ENCODE measurements at regions of chr21 and their contacts with region 1.

Region 1: GRCh38 chr21:40120940-40121575 is 253.8 kb downstream of the PCP4 start:
- DNase-seq: no peak
- ATAC-seq: peak; percentile 37 to 42
- H3K4me3 ChIP-seq: no peak overlapping the region
- H3K27ac ChIP-seq: no peak overlapping the region
- H3K4me1 ChIP-seq: no peaks in the 10 kb centered on the region
- H3K27me3 ChIP-seq: no peaks in the 10 kb centered on the region
- CTCF ChIP-seq: peak; percentile 74

Region 2: DNA sequence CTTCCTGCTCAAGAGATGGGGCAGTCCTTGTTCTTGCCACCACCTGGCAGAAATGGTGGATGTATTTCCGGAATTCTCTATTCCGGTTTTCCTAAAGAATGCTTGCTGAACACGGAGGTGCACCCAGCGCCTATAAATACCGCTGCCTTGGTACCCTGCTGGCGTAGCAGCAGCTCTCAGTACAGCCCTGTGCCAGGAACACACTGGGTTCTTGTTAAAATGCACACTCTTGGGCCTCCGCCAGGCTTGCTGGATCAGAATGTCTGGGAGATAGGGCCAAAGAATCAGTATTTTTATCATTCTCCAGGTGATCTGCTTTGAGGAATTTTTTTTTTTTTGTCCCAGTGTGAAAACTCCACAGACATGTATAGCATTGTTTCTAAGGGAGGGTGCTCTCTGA is 321.9 kb before region 1 on chr21:
- intact Hi-C with region 1: loop called (anchors 10 kb)
- DNase-seq: no peak
- ATAC-seq: no peak
- H3K4me3 ChIP-seq: no peak overlapping the region
- H3K27ac ChIP-seq: no peak overlapping the region
- H3K4me1 ChIP-seq: no peaks in the 10 kb centered on the region
- H3K27me3 ChIP-seq: no peaks in the 10 kb centered on the region
- CTCF ChIP-seq: no peak